GM23248 (cell line): ENCODE measurements at regions of chr11 and their contacts with region 1.

Region 1: GRCh38 chr11:120235024-120235861 is 4.7 kb upstream of the POU2F3 start:
- DNase-seq: peak; percentile 56
- H3K4me3 ChIP-seq: no peak overlapping the region
- H3K27ac ChIP-seq: no peak overlapping the region
- H3K4me1 ChIP-seq: no peaks in the 10 kb centered on the region
- H3K27me3 ChIP-seq: peaks cover 18% of the 10 kb centered on the region

Region 2: DNA sequence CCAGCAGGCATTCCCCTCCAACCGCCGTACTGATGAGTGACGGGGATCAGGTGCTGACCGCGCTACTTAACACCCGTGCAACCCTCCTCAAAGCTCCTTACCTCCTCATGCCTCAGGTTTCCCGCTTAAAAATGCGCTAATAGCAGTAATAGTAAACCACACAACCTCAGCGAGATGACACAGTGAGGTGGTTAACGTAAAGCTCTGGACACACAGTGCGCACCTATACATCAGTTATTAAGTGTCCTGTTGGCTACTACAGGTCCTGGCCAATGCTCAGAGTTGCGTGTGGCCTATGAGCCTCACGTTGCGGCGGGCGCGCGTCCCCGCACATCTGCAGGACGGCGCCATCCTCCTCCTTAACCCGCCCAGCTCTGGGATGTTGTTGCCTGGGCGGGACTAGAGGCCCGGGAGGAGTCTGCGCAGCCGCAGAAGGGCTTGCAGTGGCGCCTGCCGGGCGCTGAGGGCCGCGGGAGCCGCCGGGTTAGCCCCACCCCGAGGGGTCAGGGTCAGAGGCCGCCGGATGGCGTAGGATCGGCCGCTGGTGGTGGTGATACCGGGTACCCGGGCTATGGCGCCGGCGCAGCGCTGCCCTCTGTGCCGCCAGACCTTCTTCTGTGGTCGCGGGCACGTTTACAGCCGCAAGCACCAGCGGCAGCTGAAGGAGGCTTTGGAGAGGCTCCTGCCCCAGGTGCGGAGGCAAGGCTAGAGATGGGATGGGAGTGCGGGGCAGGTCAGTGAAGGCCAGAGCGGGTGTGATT is 1237.4 kb before region 1 on chr11 and contains the start of gene CENATAC:
- in situ Hi-C with region 1: no loop called
- DNase-seq: peak; percentile 96
- H3K4me3 ChIP-seq: peak within 1 kb of the TSS; percentile 90
- H3K27ac ChIP-seq: peak within 1 kb of the TSS; percentile 75
- H3K4me1 ChIP-seq: peaks cover 26% of the 10 kb centered on the region
- H3K27me3 ChIP-seq: no peaks in the 10 kb centered on the region
- total RNA-seq, gene CENATAC: 15.3 and 19.3 TPM in 2 replicates

Region 3: GRCh38 chr11:119895981-119896380 is 339.3 kb before region 1 on chr11:
- in situ Hi-C with region 1: no loop called
- DNase-seq: no peak
- H3K4me3 ChIP-seq: no peak overlapping the region
- H3K27ac ChIP-seq: no peak overlapping the region
- H3K4me1 ChIP-seq: no peaks in the 10 kb centered on the region
- H3K27me3 ChIP-seq: peaks cover 59% of the 10 kb centered on the region

Region 4: DNA sequence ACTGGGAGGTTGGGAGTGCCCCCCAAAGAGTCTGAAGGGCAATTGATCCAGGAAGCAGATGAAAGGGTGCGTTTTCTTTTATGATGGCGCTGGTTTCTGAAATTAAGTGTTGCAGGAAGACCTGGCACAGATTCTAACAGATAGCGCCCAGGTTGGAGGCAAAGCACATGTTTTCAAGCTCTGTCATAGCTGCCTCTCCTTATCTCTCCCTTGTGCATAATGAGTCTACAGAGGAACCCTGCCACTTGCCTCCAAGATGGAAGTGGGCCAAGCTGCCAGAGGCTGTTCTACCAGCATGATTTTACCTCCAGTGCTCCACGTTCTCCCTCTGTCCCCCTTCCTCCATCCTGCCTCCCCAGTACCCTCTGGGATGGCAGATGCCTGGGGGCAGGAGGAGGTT is 59.8 kb after region 1 on chr11:
- in situ Hi-C with region 1: loop called (anchors 5 kb)
- DNase-seq: no peak
- H3K4me3 ChIP-seq: no peak overlapping the region
- H3K27ac ChIP-seq: no peak overlapping the region
- H3K4me1 ChIP-seq: no peaks in the 10 kb centered on the region
- H3K27me3 ChIP-seq: peaks cover 47% of the 10 kb centered on the region